Tibial artery (tissue), 4 donors: ENCODE measurements at regions of chr9 and their contacts with region 1.

Region 1: GRCh38 chr9:90914868-90915483 is 113.4 kb downstream of the SYK start:
- DNase-seq: peak; percentile 56 to 75
- H3K4me3 ChIP-seq: no peak overlapping the region
- H3K27ac ChIP-seq: no peak overlapping the region
- H3K4me1 ChIP-seq: peaks cover 0 to 13% (median 12%) of the 10 kb centered on the region in 4 donors
- H3K27me3 ChIP-seq: peaks cover 0 to 14% of the 10 kb centered on the region in 2 donors
- CTCF ChIP-seq: peak; percentile 93 to 95

Region 2: GRCh38 chr9:91077627-91078441 is 162.9 kb after region 1 on chr9:
- intact Hi-C with region 1: no loop called
- DNase-seq: no peak
- H3K4me3 ChIP-seq: no peak overlapping the region
- H3K27ac ChIP-seq: no peak overlapping the region
- H3K4me1 ChIP-seq: peaks cover 0 to 25% (median 2%) of the 10 kb centered on the region in 4 donors
- H3K27me3 ChIP-seq: no peaks in the 10 kb centered on the region
- CTCF ChIP-seq: no peak

Region 3: GRCh38 chr9:91681461-91682305 is 766.7 kb after region 1 on chr9:
- intact Hi-C with region 1: loop called (anchors 10 kb)
- DNase-seq: peak; percentile 53 to 77
- H3K4me3 ChIP-seq: no peak overlapping the region
- H3K27ac ChIP-seq: no peak overlapping the region
- H3K4me1 ChIP-seq: peaks cover 0 to 7% (median 0%) of the 10 kb centered on the region in 4 donors
- H3K27me3 ChIP-seq: peaks cover 0 to 17% of the 10 kb centered on the region in 2 donors
- CTCF ChIP-seq: peak; percentile 46 to 78

Region 4: GRCh38 chr9:91734371-91734981 is 819.5 kb after region 1 on chr9:
- intact Hi-C with region 1: loop called (anchors 5 kb)
- DNase-seq: peak in 1 of 2 donors; percentile 64
- H3K4me3 ChIP-seq: no peak overlapping the region
- H3K27ac ChIP-seq: no peak overlapping the region
- H3K4me1 ChIP-seq: no peaks in the 10 kb centered on the region
- H3K27me3 ChIP-seq: peaks cover 0 to 6% of the 10 kb centered on the region in 2 donors
- CTCF ChIP-seq: peak; percentile 67 to 94